B cell (primary cell): ENCODE measurements at regions of chr5 and their contacts with region 1.

Region 1: DNA sequence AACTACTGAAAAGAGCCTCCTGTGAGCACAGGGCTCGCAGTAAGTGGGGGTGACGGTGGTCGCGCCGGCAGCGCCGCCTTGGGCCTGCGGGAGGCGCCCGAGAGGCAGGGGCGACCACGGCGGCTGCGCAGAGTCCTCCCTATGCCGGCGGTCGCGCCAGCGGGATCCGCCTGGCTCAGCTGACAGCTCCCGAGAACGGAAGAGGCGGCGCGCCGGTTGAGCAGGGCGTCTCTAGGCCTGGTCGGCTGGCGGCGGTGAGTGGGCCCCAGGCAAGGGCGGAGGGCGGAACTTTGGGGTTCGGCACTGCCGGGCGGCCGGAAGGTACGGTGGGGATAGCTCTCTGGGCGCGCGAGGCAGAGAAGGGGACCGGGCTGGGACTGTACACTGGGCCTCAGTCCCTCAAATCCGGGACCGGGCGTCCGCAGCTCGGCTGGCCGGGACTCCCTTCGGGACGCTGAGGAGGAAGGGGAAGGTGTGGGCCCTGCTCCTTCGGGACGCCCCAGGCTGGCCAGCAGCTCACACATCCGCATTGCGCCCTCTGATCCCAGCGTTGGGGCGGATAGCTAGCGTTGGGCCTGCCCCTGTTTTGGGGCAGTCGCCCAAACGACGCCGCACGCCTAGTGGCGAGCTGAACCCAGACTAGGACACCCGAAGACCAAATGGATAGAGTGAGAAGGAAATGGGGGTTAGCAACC is at the start of gene RNF14:
- DNase-seq: peak; percentile 95
- ATAC-seq: peak; percentile 91
- H3K4me3 ChIP-seq: peak within 1 kb of the TSS; percentile 63 to 95 (median 86)
- H3K4me3 Mint-ChIP-seq: peak within 1 kb of the TSS; percentile 96
- H3K27ac ChIP-seq: peak within 1 kb of the TSS; percentile 90 to 93
- H3K27ac Mint-ChIP-seq: peak within 1 kb of the TSS; percentile 98
- H3K4me1 ChIP-seq: peaks cover 19 to 34% of the 10 kb centered on the region in 2 donors
- H3K4me1 Mint-ChIP-seq: peaks cover 41% of the 10 kb centered on the region
- H3K27me3 ChIP-seq: no peaks in the 10 kb centered on the region
- H3K27me3 Mint-ChIP-seq: no peaks in the 10 kb centered on the region
- CTCF ChIP-seq: peak; percentile 99
- total RNA-seq, gene RNF14: 26.6 and 28.1 TPM in 2 replicates

Region 2: GRCh38 chr5:141650851-141651727 is 318.0 kb before region 1 on chr5 and contains the start of gene FCHSD1:
- CTCF ChIA-PET with region 1: interaction called, 4 read pairs
- POLR2A ChIA-PET with region 1: interaction called, 4 read pairs
- intact Hi-C with region 1: loop called (anchors 1 kb)
- DNase-seq: peak; percentile 89
- ATAC-seq: peak; percentile 100
- H3K4me3 ChIP-seq: peak within 1 kb of the TSS; percentile 53 to 84 (median 70)
- H3K4me3 Mint-ChIP-seq: peak within 1 kb of the TSS; percentile 99
- H3K27ac ChIP-seq: peak within 1 kb of the TSS; percentile 60 to 82
- H3K27ac Mint-ChIP-seq: peak within 1 kb of the TSS; percentile 98
- H3K4me1 ChIP-seq: peaks cover 14 to 22% of the 10 kb centered on the region in 2 donors
- H3K4me1 Mint-ChIP-seq: peaks cover 34% of the 10 kb centered on the region
- H3K27me3 ChIP-seq: peaks cover 0 to 8% (median 0%) of the 10 kb centered on the region in 4 experiments
- H3K27me3 Mint-ChIP-seq: peaks cover 7% of the 10 kb centered on the region
- CTCF ChIP-seq: no peak
- total RNA-seq, gene FCHSD1: 114 and 123 TPM in 2 replicates

Region 3: GRCh38 chr5:141691867-141692532 is 277.1 kb before region 1 on chr5:
- CTCF ChIA-PET with region 1: interaction called, 198 read pairs
- POLR2A ChIA-PET with region 1: interaction called, 6 read pairs
- intact Hi-C with region 1: loop called (anchors 2 kb)
- DNase-seq: peak; percentile 86
- ATAC-seq: peak; percentile 95
- H3K4me3 ChIP-seq: peak overlapping the region in 4 of 5 experiments; percentile 3 to 57 (median 33)
- H3K4me3 Mint-ChIP-seq: peak overlapping the region; percentile 44
- H3K27ac ChIP-seq: no peak overlapping the region
- H3K27ac Mint-ChIP-seq: no peak overlapping the region
- H3K4me1 ChIP-seq: peaks cover 8% of the 10 kb centered on the region in 2 donors
- H3K4me1 Mint-ChIP-seq: peaks cover 7% of the 10 kb centered on the region
- H3K27me3 ChIP-seq: peaks cover 0 to 47% (median 7%) of the 10 kb centered on the region in 4 experiments
- H3K27me3 Mint-ChIP-seq: peaks cover 68% of the 10 kb centered on the region
- CTCF ChIP-seq: peak; percentile 98

Region 4: DNA sequence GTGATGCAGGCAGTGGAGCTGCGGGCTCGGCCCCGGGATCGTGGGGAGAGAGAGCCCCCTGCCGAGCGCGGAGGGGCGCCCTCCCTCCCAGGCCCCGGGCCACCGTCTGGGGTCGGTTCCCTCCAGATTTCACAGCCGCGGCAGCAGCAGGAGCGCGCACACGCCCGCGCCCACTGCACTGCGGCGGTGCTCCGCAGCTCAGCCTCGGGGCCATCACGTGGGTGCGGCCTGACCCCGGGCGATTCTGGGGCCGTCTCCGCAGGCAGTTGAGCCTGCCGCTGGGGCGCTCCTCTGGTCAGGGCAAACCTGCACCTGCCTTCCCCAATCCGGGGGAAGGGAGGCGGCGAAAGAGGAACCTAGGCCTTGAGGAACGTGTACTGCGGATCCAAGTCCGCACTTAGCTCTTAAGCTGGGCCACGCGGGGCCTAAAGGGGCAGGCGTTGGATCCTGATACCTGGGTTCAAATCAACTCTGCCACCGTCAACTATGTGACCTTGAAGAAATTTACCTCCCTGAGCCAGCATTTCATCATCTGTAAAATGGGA is 54.8 kb before region 1 on chr5:
- CTCF ChIA-PET with region 1: interaction called, 16 read pairs
- POLR2A ChIA-PET with region 1: interaction called, 4 read pairs
- intact Hi-C with region 1: no loop called
- DNase-seq: peak; percentile 70
- ATAC-seq: peak; percentile 90
- H3K4me3 ChIP-seq: peak overlapping the region; percentile 32 to 56 (median 50)
- H3K4me3 Mint-ChIP-seq: peak overlapping the region; percentile 66
- H3K27ac ChIP-seq: no peak overlapping the region
- H3K27ac Mint-ChIP-seq: no peak overlapping the region
- H3K4me1 ChIP-seq: peaks cover 24 to 32% of the 10 kb centered on the region in 2 donors
- H3K4me1 Mint-ChIP-seq: peaks cover 38% of the 10 kb centered on the region
- H3K27me3 ChIP-seq: peaks cover 0 to 5% (median 3%) of the 10 kb centered on the region in 4 experiments
- H3K27me3 Mint-ChIP-seq: peaks cover 8% of the 10 kb centered on the region
- CTCF ChIP-seq: peak; percentile 30

Region 5: DNA sequence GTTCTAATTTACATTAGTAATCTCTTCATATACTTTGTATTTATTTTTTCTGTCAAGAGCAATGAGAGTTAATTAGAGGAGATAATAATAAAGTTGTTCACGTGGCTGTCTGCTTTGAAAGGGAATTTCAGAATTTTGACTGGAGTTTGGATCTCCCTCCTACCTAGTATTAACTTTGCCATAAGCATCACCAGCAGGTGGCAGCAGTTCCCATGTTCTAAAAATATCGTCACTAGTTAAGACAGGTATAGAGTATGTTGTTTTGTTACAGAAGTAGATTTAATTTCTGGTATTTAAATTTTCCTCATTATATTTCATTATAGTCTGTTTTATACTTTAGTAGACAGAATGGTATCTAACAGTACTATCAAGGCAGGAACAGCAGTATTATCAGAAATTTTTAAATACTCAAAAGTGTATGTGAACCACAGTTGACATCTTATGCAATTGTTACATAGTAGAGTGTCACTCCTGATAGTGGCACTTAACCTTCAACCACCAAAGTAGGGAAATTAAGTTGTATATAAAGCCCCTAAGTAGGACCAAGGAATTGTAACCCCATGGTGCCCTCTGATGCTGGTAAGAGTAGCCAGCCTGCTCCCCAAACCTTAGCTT is 23.4 kb after region 1 on chr5:
- CTCF ChIA-PET with region 1: interaction called, 46 read pairs
- POLR2A ChIA-PET with region 1: interaction called, 4 read pairs
- intact Hi-C with region 1: no loop called
- DNase-seq: peak; percentile 77
- ATAC-seq: peak; percentile 72
- H3K4me3 ChIP-seq: no peak overlapping the region
- H3K4me3 Mint-ChIP-seq: no peak overlapping the region
- H3K27ac ChIP-seq: no peak overlapping the region
- H3K27ac Mint-ChIP-seq: no peak overlapping the region
- H3K4me1 ChIP-seq: no peaks in the 10 kb centered on the region
- H3K4me1 Mint-ChIP-seq: no peaks in the 10 kb centered on the region
- H3K27me3 ChIP-seq: no peaks in the 10 kb centered on the region
- H3K27me3 Mint-ChIP-seq: no peaks in the 10 kb centered on the region
- CTCF ChIP-seq: peak; percentile 90

Region 6: GRCh38 chr5:142024771-142025304 is 55.8 kb after region 1 on chr5:
- CTCF ChIA-PET with region 1: no interaction called
- POLR2A ChIA-PET with region 1: no interaction called
- intact Hi-C with region 1: loop called (anchors 1 kb)
- DNase-seq: peak; percentile 85
- ATAC-seq: peak; percentile 100
- H3K4me3 ChIP-seq: peak overlapping the region; percentile 38 to 63 (median 53)
- H3K4me3 Mint-ChIP-seq: peak overlapping the region; percentile 86
- H3K27ac ChIP-seq: peak overlapping the region; percentile 59 to 76
- H3K27ac Mint-ChIP-seq: peak overlapping the region; percentile 92
- H3K4me1 ChIP-seq: peaks cover 8 to 9% of the 10 kb centered on the region in 2 donors
- H3K4me1 Mint-ChIP-seq: peaks cover 12% of the 10 kb centered on the region
- H3K27me3 ChIP-seq: peaks cover 0 to 9% (median 5%) of the 10 kb centered on the region in 4 experiments
- H3K27me3 Mint-ChIP-seq: peaks cover 26% of the 10 kb centered on the region
- CTCF ChIP-seq: no peak